Right cardiac atrium (tissue), 5 donors: ENCODE measurements at regions of chr10 and their contacts with region 1.

Region 1: DNA sequence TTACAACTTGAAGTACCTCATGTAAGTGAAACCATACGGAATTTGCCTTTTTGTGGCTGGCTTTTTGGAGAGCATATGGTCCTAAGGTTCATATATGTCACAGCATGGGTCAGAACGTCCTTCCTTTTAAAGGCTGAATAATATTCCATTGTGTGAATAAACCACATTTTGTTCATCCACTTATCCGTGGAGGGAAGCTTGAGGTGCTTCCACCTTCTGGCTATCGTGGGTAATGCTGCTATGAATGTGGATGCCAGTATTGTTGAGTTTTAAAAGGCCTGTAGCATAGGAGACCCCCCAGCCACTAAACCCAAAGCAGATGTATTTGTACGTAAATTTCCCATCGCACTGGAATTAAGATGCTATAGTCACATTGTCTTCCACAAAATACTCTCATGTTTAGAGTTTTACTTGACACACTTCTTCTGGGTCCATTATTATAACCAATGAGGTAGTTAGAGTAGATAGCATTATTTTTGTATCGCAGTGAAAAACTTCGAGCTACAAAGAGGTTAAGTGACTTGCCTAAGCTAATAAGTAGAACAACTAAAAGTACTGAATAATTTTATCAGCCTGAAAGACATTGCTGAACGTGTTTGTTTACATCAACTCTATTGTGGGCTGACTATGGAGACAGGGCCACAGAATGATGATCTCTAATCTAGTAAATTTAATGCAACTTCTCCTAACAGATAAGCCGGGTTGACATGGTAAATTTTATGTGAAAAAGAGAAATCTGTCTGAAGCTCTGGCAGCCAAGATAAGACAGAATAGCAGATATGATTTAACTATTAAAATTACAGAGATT is 183.0 kb upstream of the CTBP2 start:
- DNase-seq: no peak
- ATAC-seq: no peak
- H3K4me3 ChIP-seq: no peak overlapping the region
- H3K27ac ChIP-seq: no peak overlapping the region
- H3K4me1 ChIP-seq: no peaks in the 10 kb centered on the region
- H3K27me3 ChIP-seq: no peaks in the 10 kb centered on the region

Region 2: DNA sequence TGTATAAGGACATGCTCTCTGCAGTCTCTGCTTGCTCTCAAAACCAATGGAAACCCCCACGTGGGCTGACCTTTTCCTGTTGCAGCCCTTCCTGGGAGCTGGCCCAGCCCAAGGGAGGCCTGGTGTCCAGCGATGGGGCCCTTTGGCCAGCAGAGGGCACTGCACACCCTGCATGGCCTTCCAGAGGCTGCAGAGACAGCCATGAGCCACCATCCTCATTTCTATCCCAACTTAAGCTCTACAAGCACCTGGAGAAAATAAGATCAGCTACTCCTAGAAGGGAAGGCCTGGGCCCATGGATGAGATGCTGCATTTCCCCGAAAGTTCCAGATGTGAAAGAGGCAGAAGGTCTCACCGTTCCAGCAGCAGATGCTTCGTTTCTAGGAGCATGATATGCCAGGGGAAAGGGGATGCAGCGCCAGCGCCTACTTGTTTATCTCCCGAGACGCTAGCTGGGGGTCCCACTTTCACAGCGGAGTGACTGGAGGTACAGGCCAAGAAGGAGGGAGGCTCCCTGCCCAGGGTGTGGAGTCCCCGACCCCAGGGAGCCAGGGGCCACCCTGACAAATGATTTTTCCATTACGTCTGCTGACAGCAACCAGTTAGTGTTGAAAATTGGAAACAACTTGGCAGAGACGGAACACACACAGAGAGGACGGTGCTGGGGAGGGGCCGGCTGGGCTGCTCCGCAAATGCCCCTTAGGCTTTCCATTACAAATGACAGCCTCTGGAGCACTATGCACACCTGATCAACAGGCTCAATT is 295.0 kb before region 1 on chr10:
- intact Hi-C with region 1: loop called in 1 of 4 experiments (anchors 5 kb)
- DNase-seq: peak; percentile 87 to 95 (median 94)
- ATAC-seq: peak; percentile 92 to 93
- H3K4me3 ChIP-seq: no peak overlapping the region
- H3K27ac ChIP-seq: no peak overlapping the region
- H3K4me1 ChIP-seq: peaks cover 38% of the 10 kb centered on the region
- H3K27me3 ChIP-seq: no peaks in the 10 kb centered on the region